ENCODE measurements at regions of chr17 and their contacts with region 1.

Region 1: DNA sequence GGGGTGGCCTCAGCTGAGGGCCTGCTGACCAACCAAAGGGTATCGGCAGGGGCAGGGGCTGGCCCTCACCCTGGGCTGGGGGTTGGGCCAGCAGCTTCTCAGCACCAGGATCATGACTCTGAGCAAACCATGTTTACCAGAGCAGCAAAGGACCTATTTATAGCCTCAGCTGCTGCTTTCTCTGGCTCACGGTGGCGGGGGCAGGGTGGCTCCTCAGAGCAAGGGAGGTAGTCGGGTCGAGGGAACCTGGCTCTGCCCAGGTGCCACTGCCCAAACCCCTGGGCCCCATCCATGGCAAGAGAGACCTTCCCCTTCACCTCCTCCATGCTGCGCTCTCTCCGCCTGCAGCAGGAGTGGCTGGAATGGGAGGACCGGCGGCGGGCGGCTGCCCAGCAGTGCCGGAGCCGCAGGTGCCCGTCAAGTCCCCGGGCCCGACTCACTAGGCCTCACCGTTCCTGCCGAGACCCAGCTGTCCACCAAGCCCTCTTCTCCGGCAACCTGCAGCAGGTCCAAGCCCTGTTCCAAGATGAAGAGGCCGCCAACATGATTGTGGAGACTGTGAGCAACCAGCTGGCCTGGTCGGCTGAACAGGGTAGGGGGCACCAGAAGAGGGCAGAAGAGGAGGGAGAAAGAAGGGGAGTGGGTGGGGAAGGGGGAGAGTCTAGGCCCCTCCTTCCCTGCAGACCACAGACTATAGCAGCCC is at the start of gene ASB16:
- DNase-seq: no peak
- CTCF ChIP-seq: no peak

Region 2: GRCh38 chr17:43946069-43946696 is 224.5 kb before region 1 on chr17:
- CTCF ChIA-PET with region 1: interaction called, 29 read pairs
- POLR2A ChIA-PET with region 1: no interaction called
- DNase-seq: no peak
- CTCF ChIP-seq: no peak

Region 3: GRCh38 chr17:43994272-43995149 is 176.1 kb before region 1 on chr17:
- CTCF ChIA-PET with region 1: no interaction called
- POLR2A ChIA-PET with region 1: no interaction called
- DNase-seq: peak; percentile 76
- CTCF ChIP-seq: peak; percentile 82

Region 4: GRCh38 chr17:44095642-44096496 is 74.8 kb before region 1 on chr17:
- CTCF ChIA-PET with region 1: no interaction called
- POLR2A ChIA-PET with region 1: no interaction called
- DNase-seq: peak; percentile 62
- CTCF ChIP-seq: no peak

Region 5: GRCh38 chr17:44110823-44111633 is 59.6 kb before region 1 on chr17:
- CTCF ChIA-PET with region 1: interaction called, 10 read pairs
- POLR2A ChIA-PET with region 1: no interaction called
- DNase-seq: peak; percentile 87
- CTCF ChIP-seq: no peak

Region 6: GRCh38 chr17:44123356-44124117 is 47.1 kb before region 1 on chr17 and contains the start of gene HDAC5:
- CTCF ChIA-PET with region 1: interaction called, 11 read pairs
- POLR2A ChIA-PET with region 1: no interaction called
- DNase-seq: peak; percentile 97
- CTCF ChIP-seq: peak; percentile 72

Region 7: GRCh38 chr17:44159519-44160210 is 11.0 kb before region 1 on chr17:
- CTCF ChIA-PET with region 1: interaction called, 20 read pairs
- POLR2A ChIA-PET with region 1: no interaction called
- DNase-seq: no peak
- CTCF ChIP-seq: no peak

Region 8: GRCh38 chr17:44186307-44187130 is 15.9 kb after region 1 on chr17 and contains the start of gene TMUB2:
- CTCF ChIA-PET with region 1: interaction called, 47 read pairs
- POLR2A ChIA-PET with region 1: no interaction called
- DNase-seq: peak; percentile 100
- CTCF ChIP-seq: no peak

Measured in GM10248 (cell line).